HEK293T (cell line): ENCODE measurements at regions of chr18 and their contacts with region 1.

Region 1: GRCh38 chr18:48975649-48976204 is 25.0 kb upstream of the SMAD7 start:
- DNase-seq: peak; percentile 73

Region 2: DNA sequence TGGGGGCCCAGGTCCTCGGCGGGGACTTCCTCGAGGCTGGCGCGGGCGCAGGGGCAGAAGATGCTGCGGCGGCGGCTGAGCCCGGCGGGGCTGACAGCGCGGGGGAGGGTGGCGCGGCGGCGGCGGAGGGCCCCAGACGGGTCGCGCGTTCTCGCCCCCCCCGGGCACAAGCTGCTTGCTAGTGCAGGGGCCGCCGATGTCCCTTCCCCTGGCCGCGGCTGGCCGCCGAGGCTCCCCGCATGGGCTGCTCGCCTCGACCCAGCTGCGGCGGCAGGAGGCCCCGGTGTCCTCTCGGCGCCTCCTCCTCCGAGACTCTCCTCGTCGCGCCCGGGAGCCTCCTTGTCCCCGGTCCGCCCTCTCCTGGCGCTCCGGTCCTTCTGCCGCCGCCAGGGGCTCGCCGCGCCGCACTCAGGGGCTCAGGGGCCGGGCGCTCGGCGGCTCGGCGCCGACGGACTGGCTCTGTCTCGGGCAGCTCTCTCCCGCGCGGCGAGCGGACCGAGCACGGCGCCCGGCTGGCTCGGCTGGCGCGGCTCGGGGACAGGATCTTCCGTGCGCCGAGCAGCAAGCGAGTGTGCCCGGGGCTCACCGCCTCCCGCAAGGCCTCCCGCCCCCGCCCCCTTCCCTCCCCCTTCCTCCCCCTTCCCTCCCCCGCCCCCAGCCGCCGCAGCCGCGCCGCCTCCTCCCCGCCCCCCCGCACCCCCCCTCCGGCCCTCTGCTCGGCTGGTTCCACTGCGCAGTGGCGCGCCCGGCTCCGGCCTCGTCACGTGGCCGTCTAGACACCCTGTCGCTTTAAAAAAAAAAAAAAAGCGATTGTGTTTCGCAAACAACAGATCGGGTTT is 24.1 kb before region 1 on chr18:
- CTCF ChIA-PET with region 1: no interaction called
- POLR2A ChIA-PET with region 1: interaction called, 13 read pairs
- DNase-seq: peak; percentile 65